Stomach (tissue), 19 donors: ENCODE measurements at regions of chr12 and their contacts with region 1.

Region 1: GRCh38 chr12:22100958-22101748 is 55.1 kb downstream of the CMAS start:
- DNase-seq: peak; percentile 46 to 69
- H3K4me3 ChIP-seq: no peak overlapping the region
- H3K27ac ChIP-seq: no peak overlapping the region
- H3K4me1 ChIP-seq: peaks cover 0 to 10% (median 0%) of the 10 kb centered on the region in 4 donors
- H3K27me3 ChIP-seq: no peaks in the 10 kb centered on the region
- CTCF ChIP-seq: peak in 5 of 7 experiments; percentile 18 to 49 (median 28)
- EP300 ChIP-seq: no peak
- POLR2A ChIP-seq: no peak

Region 2: GRCh38 chr12:22334410-22335290 is 233.5 kb after region 1 on chr12 and contains the start of gene ST8SIA1:
- intact Hi-C with region 1: loop called (anchors 10 kb)
- DNase-seq: peak; percentile 33 to 76
- H3K4me3 ChIP-seq: peak within 1 kb of the TSS; percentile 63 to 71 (median 66)
- H3K27ac ChIP-seq: peak within 1 kb of the TSS; percentile 64 to 86 (median 74)
- H3K4me1 ChIP-seq: peaks cover 0 to 49% (median 32%) of the 10 kb centered on the region in 4 donors
- H3K27me3 ChIP-seq: peaks cover 0 to 39% (median 23%) of the 10 kb centered on the region in 3 donors
- CTCF ChIP-seq: no peak
- EP300 ChIP-seq: no peak
- POLR2A ChIP-seq: no peak
- total RNA-seq, gene ST8SIA1: 0.29 to 5.0 (median 1.8) TPM

Region 3: GRCh38 chr12:22459838-22460490 is 358.8 kb after region 1 on chr12:
- intact Hi-C with region 1: loop called (anchors 10 kb)
- DNase-seq: peak in 1 of 2 donors; percentile 64
- H3K4me3 ChIP-seq: no peak overlapping the region
- H3K27ac ChIP-seq: no peak overlapping the region
- H3K4me1 ChIP-seq: peaks cover 0 to 4% (median 0%) of the 10 kb centered on the region in 4 donors
- H3K27me3 ChIP-seq: no peaks in the 10 kb centered on the region
- CTCF ChIP-seq: peak in 4 of 7 experiments; percentile 22 to 56 (median 45)
- EP300 ChIP-seq: no peak
- POLR2A ChIP-seq: no peak